Mammary epithelial cell (primary cell): ENCODE measurements at regions of chr12 and their contacts with region 1.

Region 1: DNA sequence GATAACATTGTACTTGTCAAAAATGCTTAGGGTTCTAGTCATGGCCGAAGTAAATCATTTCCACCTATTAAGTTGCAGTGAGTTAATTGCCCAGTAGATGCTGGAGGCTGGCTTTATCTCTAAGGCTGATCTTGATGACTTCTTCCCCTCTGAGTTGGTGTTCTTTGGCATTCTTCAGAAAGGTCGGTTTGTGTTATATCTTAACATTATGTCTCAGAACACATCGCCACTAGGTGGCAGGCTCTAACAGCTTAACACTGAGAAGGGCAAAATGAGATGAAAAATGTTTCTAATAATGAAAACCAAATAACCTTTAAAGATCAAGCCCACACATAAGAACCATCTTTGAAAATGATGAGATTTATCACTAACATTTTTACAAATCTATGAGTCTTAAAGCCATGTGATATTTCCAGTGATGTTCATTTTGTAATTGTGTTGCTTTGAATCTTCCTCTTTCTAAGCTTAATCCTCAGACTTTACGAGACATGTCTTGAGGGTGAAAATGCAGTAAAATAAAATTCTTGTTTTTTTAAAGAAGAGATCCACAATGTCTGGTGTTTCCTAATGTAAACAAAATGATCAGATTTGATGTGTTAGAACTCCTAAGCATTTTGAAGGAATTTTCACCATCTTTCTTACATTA is 28.6 kb downstream of the SUDS3 start:
- DNase-seq: peak; percentile 45
- H3K4me3 ChIP-seq: no peak overlapping the region
- H3K27ac ChIP-seq: no peak overlapping the region
- H3K4me1 ChIP-seq: no peaks in the 10 kb centered on the region
- H3K27me3 ChIP-seq: no peaks in the 10 kb centered on the region
- CTCF ChIP-seq: peak; percentile 74 to 81

Region 2: DNA sequence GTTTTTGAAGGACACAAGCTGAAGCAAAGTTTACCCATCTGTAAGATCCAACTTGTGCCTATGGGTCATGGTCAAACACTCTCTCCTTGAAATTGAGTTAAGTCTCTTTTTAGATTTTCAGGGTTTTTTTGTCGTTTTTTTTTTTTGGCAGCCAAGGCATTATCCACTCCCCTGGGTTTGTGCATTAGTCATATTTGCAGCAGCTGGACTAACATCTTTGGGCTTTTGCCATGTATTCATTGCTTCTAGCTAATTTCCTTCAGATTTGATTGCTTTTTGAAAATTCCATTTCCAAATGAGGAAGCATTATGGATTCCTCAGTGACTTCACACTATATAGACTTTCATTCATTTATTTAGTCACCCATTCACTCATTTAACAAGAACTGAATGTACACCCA is 496.0 kb after region 1 on chr12:
- CTCF ChIA-PET with region 1: no interaction called
- dilution Hi-C with region 1: no loop called
- in situ Hi-C with region 1: no loop called
- intact Hi-C with region 1: no loop called
- DNase-seq: no peak
- H3K4me3 ChIP-seq: no peak overlapping the region
- H3K27ac ChIP-seq: no peak overlapping the region
- H3K4me1 ChIP-seq: no peaks in the 10 kb centered on the region
- H3K27me3 ChIP-seq: no peaks in the 10 kb centered on the region
- CTCF ChIP-seq: no peak

Region 3: GRCh38 chr12:119412811-119413794 is 1008.1 kb after region 1 on chr12:
- CTCF ChIA-PET with region 1: interaction called, 4 read pairs
- dilution Hi-C with region 1: no loop called
- in situ Hi-C with region 1: loop called in 1 of 2 experiments (anchors 25 kb)
- intact Hi-C with region 1: loop called (anchors 1 kb)
- DNase-seq: peak; percentile 28
- H3K4me3 ChIP-seq: no peak overlapping the region
- H3K27ac ChIP-seq: no peak overlapping the region
- H3K4me1 ChIP-seq: no peaks in the 10 kb centered on the region
- H3K27me3 ChIP-seq: no peaks in the 10 kb centered on the region
- CTCF ChIP-seq: peak; percentile 73 to 79

Region 4: DNA sequence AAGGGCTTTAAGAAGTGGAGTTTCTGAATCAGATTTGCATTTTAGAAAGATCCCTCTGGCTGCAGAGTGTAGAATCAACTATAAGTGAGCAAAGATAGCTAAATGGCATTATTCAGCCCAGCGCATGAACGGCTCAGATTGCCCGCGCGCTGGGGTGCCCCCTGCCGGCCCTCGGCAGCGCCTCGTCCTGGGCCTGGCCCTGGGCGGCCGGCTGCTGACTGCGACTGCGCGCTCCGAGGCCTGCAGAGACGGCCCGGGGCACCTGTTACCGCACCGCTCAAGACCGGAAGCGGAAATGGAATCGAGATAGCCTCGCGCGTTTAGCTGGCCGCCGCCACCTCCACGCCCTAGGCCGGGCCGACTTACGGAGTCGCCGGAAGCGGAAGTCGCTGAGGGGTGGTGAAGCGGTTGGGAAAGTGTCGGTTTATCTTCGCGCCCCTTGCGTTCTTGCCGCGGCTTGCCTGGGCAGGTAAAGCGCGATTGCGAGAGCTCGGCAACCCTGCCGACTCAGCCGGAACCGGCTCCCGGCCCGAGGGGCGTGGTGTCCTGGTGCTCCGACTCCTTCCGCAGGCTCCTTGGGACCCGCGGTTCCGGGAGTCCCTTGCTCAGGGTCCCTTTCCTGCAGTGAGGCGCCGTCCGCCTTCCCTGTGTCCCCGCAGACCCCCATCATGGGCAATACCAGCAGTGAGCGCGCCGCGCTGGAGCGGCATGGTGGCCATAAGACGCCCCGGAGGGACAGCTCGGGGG is 1262.8 kb after region 1 on chr12 and contains the start of gene PRKAB1:
- CTCF ChIA-PET with region 1: no interaction called
- dilution Hi-C with region 1: no loop called
- in situ Hi-C with region 1: loop called in 1 of 2 experiments (anchors 25 kb)
- intact Hi-C with region 1: loop called (anchors 10 kb)
- DNase-seq: peak; percentile 98
- H3K4me3 ChIP-seq: peak within 1 kb of the TSS; percentile 91 to 95 (median 94)
- H3K27ac ChIP-seq: peak within 1 kb of the TSS; percentile 74
- H3K4me1 ChIP-seq: peaks cover 14% of the 10 kb centered on the region
- H3K27me3 ChIP-seq: no peaks in the 10 kb centered on the region
- CTCF ChIP-seq: peak; percentile 83 to 93
- total RNA-seq, gene PRKAB1: 21.8 to 33.4 TPM